ENCODE measurements at regions of chr12 and their contacts with region 1.

Region 1: GRCh38 chr12:106357549-106358395 is at the start of gene POLR3B:
- DNase-seq: peak; percentile 95 to 99 (median 98)
- ATAC-seq: peak; percentile 98
- H3K4me3 ChIP-seq: peak within 1 kb of the TSS; percentile 96
- H3K4me3 Mint-ChIP-seq: peak within 1 kb of the TSS; percentile 81 to 97 (median 92)
- H3K27ac ChIP-seq: peak within 1 kb of the TSS; percentile 74
- H3K27ac Mint-ChIP-seq: peak within 1 kb of the TSS; percentile 85 to 95 (median 91)
- H3K4me1 ChIP-seq: peaks cover 6 to 12% of the 10 kb centered on the region in 2 donors
- H3K4me1 Mint-ChIP-seq: peaks cover 11 to 22% (median 17%) of the 10 kb centered on the region in 7 donors
- H3K27me3 ChIP-seq: no peaks in the 10 kb centered on the region
- H3K27me3 Mint-ChIP-seq: no peaks in the 10 kb centered on the region
- total RNA-seq, gene POLR3B: 4.7 to 8.7 (median 6.8) TPM

Region 2: GRCh38 chr12:104986022-104986941 is 1371.5 kb before region 1 on chr12 and contains the start of gene NOPCHAP1:
- CTCF ChIA-PET with region 1: no interaction called
- POLR2A ChIA-PET with region 1: no interaction called
- intact Hi-C with region 1: loop called in 1 of 2 experiments (anchors 2 kb)
- DNase-seq: peak; percentile 64 to 84 (median 78)
- ATAC-seq: peak; percentile 100
- H3K4me3 ChIP-seq: peak within 1 kb of the TSS; percentile 91
- H3K4me3 Mint-ChIP-seq: peak within 1 kb of the TSS; percentile 90 to 95 (median 94)
- H3K27ac ChIP-seq: peak within 1 kb of the TSS; percentile 73
- H3K27ac Mint-ChIP-seq: peak within 1 kb of the TSS; percentile 63 to 87 (median 74)
- H3K4me1 ChIP-seq: peaks cover 12 to 13% of the 10 kb centered on the region in 2 donors
- H3K4me1 Mint-ChIP-seq: peaks cover 19 to 47% (median 37%) of the 10 kb centered on the region in 7 donors
- H3K27me3 ChIP-seq: no peaks in the 10 kb centered on the region
- H3K27me3 Mint-ChIP-seq: peaks cover 0 to 13% (median 5%) of the 10 kb centered on the region in 5 donors
- total RNA-seq, gene NOPCHAP1: 10.5 to 18.0 (median 15.2) TPM

Region 3: GRCh38 chr12:106223485-106224354 is 134.1 kb before region 1 on chr12:
- CTCF ChIA-PET with region 1: interaction called, 11 read pairs
- POLR2A ChIA-PET with region 1: interaction called, 10 read pairs
- intact Hi-C with region 1: loop called (anchors 1 to 2 kb)
- DNase-seq: peak; percentile 41 to 80 (median 66)
- ATAC-seq: peak; percentile 78
- H3K4me3 ChIP-seq: no peak overlapping the region
- H3K4me3 Mint-ChIP-seq: peak overlapping the region in 3 of 10 donors; percentile 14 to 67 (median 33)
- H3K27ac ChIP-seq: no peak overlapping the region
- H3K27ac Mint-ChIP-seq: peak overlapping the region in 1 of 9 donors; percentile 49
- H3K4me1 ChIP-seq: peaks cover 0 to 13% of the 10 kb centered on the region in 2 donors
- H3K4me1 Mint-ChIP-seq: peaks cover 12 to 22% (median 19%) of the 10 kb centered on the region in 7 donors
- H3K27me3 ChIP-seq: no peaks in the 10 kb centered on the region
- H3K27me3 Mint-ChIP-seq: peaks cover 4 to 20% (median 10%) of the 10 kb centered on the region in 5 donors

Region 4: DNA sequence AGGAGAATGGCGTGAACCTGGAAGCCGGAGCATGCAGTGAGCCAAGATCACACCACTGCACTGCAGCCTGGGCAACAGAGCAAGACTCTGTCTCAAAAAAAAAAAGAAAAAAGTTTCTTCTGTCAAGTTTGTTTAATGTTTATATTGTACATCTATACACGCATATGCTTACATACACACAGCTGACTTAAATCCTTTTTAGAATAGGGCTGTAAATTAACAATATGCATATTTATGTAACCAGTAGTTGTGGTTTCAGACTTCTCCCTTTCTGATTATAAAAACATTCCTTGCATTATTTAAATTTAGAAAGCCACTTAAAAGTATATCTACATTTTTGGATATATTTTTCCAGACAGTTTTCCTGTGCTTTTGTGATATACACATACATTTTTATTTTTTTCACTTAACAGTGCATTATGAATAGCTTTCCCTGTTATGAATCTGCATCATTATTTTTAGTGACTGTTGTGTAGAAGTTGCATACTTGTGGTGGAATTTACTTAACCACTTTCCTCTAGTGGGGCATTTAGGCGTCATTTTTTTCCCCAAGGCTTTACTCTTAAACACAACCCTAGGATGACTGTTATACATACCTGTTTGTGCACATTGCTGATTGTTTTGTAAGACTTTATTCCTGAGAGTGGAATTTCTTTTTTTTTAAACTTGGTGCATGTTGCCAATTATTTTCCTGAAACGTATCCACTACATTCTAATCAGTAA is 29.2 kb after region 1 on chr12:
- CTCF ChIA-PET with region 1: no interaction called
- POLR2A ChIA-PET with region 1: no interaction called
- intact Hi-C with region 1: loop called in 1 of 2 experiments (anchors 1 kb)
- DNase-seq: no peak
- ATAC-seq: no peak
- H3K4me3 ChIP-seq: no peak overlapping the region
- H3K4me3 Mint-ChIP-seq: no peak overlapping the region
- H3K27ac ChIP-seq: no peak overlapping the region
- H3K27ac Mint-ChIP-seq: no peak overlapping the region
- H3K4me1 ChIP-seq: no peaks in the 10 kb centered on the region
- H3K4me1 Mint-ChIP-seq: peaks cover 0 to 4% (median 0%) of the 10 kb centered on the region in 7 donors
- H3K27me3 ChIP-seq: no peaks in the 10 kb centered on the region
- H3K27me3 Mint-ChIP-seq: no peaks in the 10 kb centered on the region

Region 5: GRCh38 chr12:106841510-106842302 is 483.9 kb after region 1 on chr12:
- CTCF ChIA-PET with region 1: interaction called, 3 read pairs
- POLR2A ChIA-PET with region 1: interaction called, 3 read pairs
- intact Hi-C with region 1: loop called in 1 of 2 experiments (anchors 1 kb)
- DNase-seq: peak in 6 of 9 donors; percentile 24 to 49 (median 44)
- ATAC-seq: peak; percentile 45
- H3K4me3 ChIP-seq: no peak overlapping the region
- H3K4me3 Mint-ChIP-seq: no peak overlapping the region
- H3K27ac ChIP-seq: no peak overlapping the region
- H3K27ac Mint-ChIP-seq: peak overlapping the region in 2 of 9 donors; percentile 20 to 26
- H3K4me1 ChIP-seq: no peaks in the 10 kb centered on the region
- H3K4me1 Mint-ChIP-seq: peaks cover 14 to 32% (median 20%) of the 10 kb centered on the region in 7 donors
- H3K27me3 ChIP-seq: no peaks in the 10 kb centered on the region
- H3K27me3 Mint-ChIP-seq: no peaks in the 10 kb centered on the region

Region 6: GRCh38 chr12:106955377-106956047 is 597.7 kb after region 1 on chr12 and contains the start of gene TMEM263:
- CTCF ChIA-PET with region 1: no interaction called
- POLR2A ChIA-PET with region 1: interaction called, 10 read pairs
- intact Hi-C with region 1: loop called (anchors 1 kb)
- DNase-seq: peak; percentile 78 to 91 (median 86)
- ATAC-seq: peak; percentile 90
- H3K4me3 ChIP-seq: peak within 1 kb of the TSS; percentile 94
- H3K4me3 Mint-ChIP-seq: peak within 1 kb of the TSS; percentile 88 to 99 (median 96)
- H3K27ac ChIP-seq: peak within 1 kb of the TSS; percentile 94
- H3K27ac Mint-ChIP-seq: peak within 1 kb of the TSS; percentile 93 to 97 (median 96)
- H3K4me1 ChIP-seq: peaks cover 8 to 10% of the 10 kb centered on the region in 2 donors
- H3K4me1 Mint-ChIP-seq: peaks cover 17 to 57% (median 38%) of the 10 kb centered on the region in 7 donors
- H3K27me3 ChIP-seq: no peaks in the 10 kb centered on the region
- H3K27me3 Mint-ChIP-seq: peaks cover 0 to 11% (median 0%) of the 10 kb centered on the region in 5 donors
- total RNA-seq, gene TMEM263: 20.0 to 45.5 (median 31.5) TPM